ENCODE measurements at regions of chr1 and their contacts with region 1.

Region 1: GRCh38 chr1:180533266-180533987 is 25.3 kb upstream of the OVAAL start:
- DNase-seq: no peak
- H3K4me3 ChIP-seq: no peak overlapping the region
- CTCF ChIP-seq: peak; percentile 85

Region 2: DNA sequence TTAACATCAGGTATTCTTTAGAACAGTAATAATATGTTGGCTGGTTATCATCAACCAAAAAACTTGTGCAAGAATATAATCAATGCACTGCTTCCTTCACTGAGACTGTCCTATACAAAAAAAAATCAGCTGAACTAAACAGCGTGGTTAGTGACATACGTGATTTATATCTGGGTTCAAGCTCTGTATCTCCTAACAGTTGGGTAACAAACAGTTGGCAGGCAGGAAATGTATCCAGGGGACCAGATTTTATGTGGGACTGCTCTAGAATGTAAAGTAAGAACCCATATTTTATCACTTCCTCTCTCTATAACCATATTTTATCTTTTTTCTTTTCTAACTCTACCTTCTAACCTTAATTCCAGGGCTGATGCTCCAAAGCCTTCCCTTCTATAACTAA is 39.1 kb before region 1 on chr1:
- CTCF ChIA-PET with region 1: no interaction called
- POLR2A ChIA-PET with region 1: no interaction called
- DNase-seq: no peak
- H3K4me3 ChIP-seq: no peak overlapping the region
- CTCF ChIP-seq: no peak

Region 3: GRCh38 chr1:180515864-180516388 is 17.5 kb before region 1 on chr1:
- CTCF ChIA-PET with region 1: interaction called, 30 read pairs
- POLR2A ChIA-PET with region 1: interaction called, 3 read pairs
- DNase-seq: no peak
- H3K4me3 ChIP-seq: no peak overlapping the region
- CTCF ChIP-seq: peak; percentile 68

Region 4: GRCh38 chr1:180521474-180522207 is 11.8 kb before region 1 on chr1:
- CTCF ChIA-PET with region 1: interaction called, 30 read pairs
- POLR2A ChIA-PET with region 1: interaction called, 3 read pairs
- DNase-seq: no peak
- H3K4me3 ChIP-seq: no peak overlapping the region
- CTCF ChIP-seq: no peak

Region 5: GRCh38 chr1:180548686-180549317 is 15.4 kb after region 1 on chr1:
- CTCF ChIA-PET with region 1: interaction called, 17 read pairs
- POLR2A ChIA-PET with region 1: no interaction called
- DNase-seq: no peak
- H3K4me3 ChIP-seq: no peak overlapping the region
- CTCF ChIP-seq: no peak

Region 6: GRCh38 chr1:180631766-180632325 is 98.4 kb after region 1 on chr1 and contains the start of gene XPR1:
- CTCF ChIA-PET with region 1: interaction called, 15 read pairs
- POLR2A ChIA-PET with region 1: interaction called, 3 read pairs
- DNase-seq: peak; percentile 94
- H3K4me3 ChIP-seq: peak within 1 kb of the TSS; percentile 96
- CTCF ChIP-seq: peak; percentile 35

Measured in AG04449 (cell line).